Esophagus muscularis mucosa (tissue), 4 donors: ENCODE measurements at regions of chr20 and their contacts with region 1.

Region 1: DNA sequence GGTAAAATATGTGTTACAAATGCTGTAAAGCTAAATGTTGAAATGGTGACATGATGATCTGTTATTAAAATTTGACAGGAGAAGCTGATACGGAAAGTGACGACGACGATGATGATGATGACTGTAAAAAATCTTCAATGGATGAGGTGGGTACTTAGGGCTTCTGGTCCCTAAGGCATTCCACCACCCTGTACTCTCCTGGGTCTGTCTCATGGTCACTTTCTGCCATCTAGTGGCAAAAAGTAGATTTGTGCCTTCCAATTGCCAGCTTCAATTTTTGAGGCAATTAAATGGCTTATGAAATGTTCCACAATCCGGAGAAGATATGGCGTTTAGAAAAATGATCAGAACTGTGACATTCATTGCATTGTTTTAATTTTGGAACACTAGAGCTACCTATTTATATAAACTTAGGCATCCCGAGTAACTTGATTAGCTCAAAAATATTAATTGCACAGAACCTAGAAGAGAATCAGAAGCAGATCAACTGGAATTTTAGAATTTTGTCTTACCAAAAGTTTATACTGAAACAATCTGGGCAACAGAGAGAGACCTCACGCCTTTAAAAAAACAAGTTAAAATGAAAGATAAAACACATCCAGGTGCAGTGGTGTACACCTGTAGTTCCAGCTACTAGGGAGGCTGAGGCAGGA is 346.5 kb upstream of the PLCB4 start:
- DNase-seq: no peak
- H3K4me3 ChIP-seq: no peak overlapping the region
- H3K27ac ChIP-seq: no peak overlapping the region
- H3K4me1 ChIP-seq: peaks cover 4 to 21% (median 14%) of the 10 kb centered on the region in 4 donors
- H3K27me3 ChIP-seq: no peaks in the 10 kb centered on the region
- CTCF ChIP-seq: peak; percentile 76 to 81 (median 77)
- EP300 ChIP-seq: no peak
- POLR2A ChIP-seq: no peak

Region 2: DNA sequence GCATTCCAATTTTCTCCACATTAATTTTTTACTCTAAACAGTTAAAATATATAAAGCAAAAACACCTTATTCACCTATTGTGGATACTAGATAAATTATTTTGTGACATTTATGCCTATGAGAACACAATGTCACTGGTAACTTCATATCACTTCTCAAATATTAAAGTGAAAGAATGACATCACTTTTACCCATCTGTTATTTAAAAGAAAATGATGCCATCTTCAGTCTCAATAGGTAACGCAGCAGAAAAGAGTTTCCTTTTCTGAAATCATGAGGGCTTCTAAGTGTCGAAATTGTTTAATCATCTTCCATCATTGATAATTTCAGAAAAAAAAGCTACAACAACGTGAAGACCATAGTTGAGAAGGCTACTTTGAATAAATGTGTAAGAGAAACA is 785.1 kb before region 1 on chr20:
- intact Hi-C with region 1: loop called (anchors 2 kb)
- DNase-seq: no peak
- H3K4me3 ChIP-seq: no peak overlapping the region
- H3K27ac ChIP-seq: no peak overlapping the region
- H3K4me1 ChIP-seq: peaks cover 0 to 12% (median 11%) of the 10 kb centered on the region in 4 donors
- H3K27me3 ChIP-seq: no peaks in the 10 kb centered on the region
- CTCF ChIP-seq: no peak
- EP300 ChIP-seq: no peak
- POLR2A ChIP-seq: no peak

Region 3: GRCh38 chr20:8043687-8044282 is 678.6 kb before region 1 on chr20:
- intact Hi-C with region 1: loop called (anchors 5 kb)
- DNase-seq: no peak
- H3K4me3 ChIP-seq: peak overlapping the region in 1 of 4 donors; percentile 21
- H3K27ac ChIP-seq: no peak overlapping the region
- H3K4me1 ChIP-seq: peaks cover 0 to 10% (median 0%) of the 10 kb centered on the region in 4 donors
- H3K27me3 ChIP-seq: no peaks in the 10 kb centered on the region
- CTCF ChIP-seq: peak; percentile 71 to 75 (median 73)
- EP300 ChIP-seq: no peak
- POLR2A ChIP-seq: no peak

Region 4: DNA sequence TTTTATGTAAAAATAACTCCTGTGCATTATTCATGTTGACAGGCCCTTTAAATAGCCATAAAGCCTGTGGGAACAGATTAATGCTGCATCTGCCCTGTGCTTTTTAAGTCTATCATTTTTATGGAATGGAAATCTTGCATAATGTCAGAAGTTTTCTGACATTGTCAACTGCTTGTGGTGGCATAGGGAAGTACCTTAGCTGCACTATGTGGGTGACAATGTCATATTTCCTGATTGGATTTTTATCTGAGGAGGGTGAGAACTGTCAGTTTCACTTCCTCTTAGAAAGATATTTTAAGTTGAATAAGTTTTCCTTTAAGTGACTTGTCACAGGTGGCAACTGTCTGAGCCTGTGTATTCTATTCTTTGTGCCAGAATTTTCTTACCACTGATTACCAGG is 322.5 kb before region 1 on chr20:
- intact Hi-C with region 1: loop called (anchors 5 kb)
- DNase-seq: no peak
- H3K4me3 ChIP-seq: no peak overlapping the region
- H3K27ac ChIP-seq: no peak overlapping the region
- H3K4me1 ChIP-seq: peaks cover 0 to 16% (median 10%) of the 10 kb centered on the region in 4 donors
- H3K27me3 ChIP-seq: no peaks in the 10 kb centered on the region
- CTCF ChIP-seq: no peak
- EP300 ChIP-seq: no peak
- POLR2A ChIP-seq: no peak